ENCODE measurements at regions of chr6 and their contacts with region 1.

Region 1: DNA sequence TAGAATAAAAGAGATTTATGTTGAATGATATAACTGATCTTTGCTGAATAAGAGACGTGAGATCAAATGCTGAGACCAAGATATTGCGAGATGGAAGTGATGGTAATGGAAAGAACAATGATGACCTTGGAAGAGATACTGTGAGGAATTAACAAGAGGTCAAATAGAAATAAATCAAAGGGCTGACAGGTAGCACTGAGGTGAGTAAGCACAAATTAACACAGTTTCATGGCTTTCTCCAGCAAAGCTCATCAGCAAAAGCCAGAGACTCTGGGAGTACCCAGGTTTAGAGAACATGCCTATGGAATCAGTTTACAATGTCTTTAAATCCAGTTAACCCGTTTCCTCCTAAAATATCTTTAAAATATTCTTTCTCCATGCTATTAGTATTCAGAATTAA is 53.3 kb downstream of the POU3F2 start:
- DNase-seq: no peak
- H3K4me3 ChIP-seq: no peak overlapping the region
- H3K27ac ChIP-seq: no peak overlapping the region
- H3K4me1 ChIP-seq: no peaks in the 10 kb centered on the region
- CTCF ChIP-seq: no peak

Region 2: GRCh38 chr6:98904096-98904495 is 16.4 kb after region 1 on chr6:
- CTCF ChIA-PET with region 1: no interaction called
- POLR2A ChIA-PET with region 1: interaction called, 24 read pairs
- intact Hi-C with region 1: no loop called
- DNase-seq: no peak
- H3K4me3 ChIP-seq: no peak overlapping the region
- H3K27ac ChIP-seq: no peak overlapping the region
- H3K4me1 ChIP-seq: peaks cover 22% of the 10 kb centered on the region
- CTCF ChIP-seq: no peak

Region 3: DNA sequence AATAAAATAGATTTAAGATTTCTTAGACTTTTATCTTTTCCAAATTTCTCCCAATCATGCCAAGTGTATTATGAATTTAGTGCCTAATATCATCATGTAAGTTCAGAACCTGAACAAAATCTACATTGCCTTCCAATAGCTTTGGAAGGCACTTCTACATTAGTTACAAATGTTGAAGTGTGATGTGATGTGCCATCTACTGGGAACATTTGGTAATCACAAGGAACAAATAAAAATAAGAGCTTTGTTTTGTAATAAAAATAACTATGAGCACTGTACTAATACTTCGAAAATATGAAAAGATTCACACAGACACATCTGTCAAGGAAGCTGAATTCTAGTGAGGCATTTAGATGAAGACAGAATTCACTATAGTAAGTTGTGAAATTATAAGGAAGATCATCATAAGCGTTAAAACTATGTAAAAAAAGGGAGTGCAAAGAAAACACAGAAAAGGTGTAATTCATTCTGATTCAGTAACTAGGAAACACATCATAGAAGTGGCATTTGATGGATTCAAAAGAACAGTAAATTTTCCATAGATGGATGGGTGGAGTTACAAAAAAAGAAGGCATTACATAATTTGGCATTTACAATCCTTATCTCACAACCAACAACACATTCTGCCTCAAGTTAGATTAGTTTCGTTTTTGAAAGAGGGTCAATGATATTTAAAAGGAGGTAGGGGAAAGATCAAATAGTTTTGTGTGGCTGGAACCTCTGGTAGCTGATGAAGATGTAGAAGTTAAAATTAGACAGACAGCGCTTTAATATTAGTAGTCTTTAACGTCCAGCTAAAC is 1832.4 kb after region 1 on chr6:
- CTCF ChIA-PET with region 1: no interaction called
- POLR2A ChIA-PET with region 1: no interaction called
- intact Hi-C with region 1: no loop called
- DNase-seq: peak; percentile 21
- H3K4me3 ChIP-seq: no peak overlapping the region
- H3K27ac ChIP-seq: no peak overlapping the region
- H3K4me1 ChIP-seq: no peaks in the 10 kb centered on the region
- CTCF ChIP-seq: peak; percentile 82

Measured in OCI-LY7 (cell line).